ENCODE measurements at regions of chr3 and their contacts with region 1.

Region 1: GRCh38 chr3:186259612-186260383 is 102.2 kb downstream of the DGKG start:
- DNase-seq: peak; percentile 81 to 85 (median 84)
- ATAC-seq: peak; percentile 95
- H3K4me3 ChIP-seq: no peak overlapping the region
- H3K27ac ChIP-seq: no peak overlapping the region
- H3K4me1 ChIP-seq: peaks cover 7% of the 10 kb centered on the region
- H3K27me3 ChIP-seq: no peaks in the 10 kb centered on the region
- CTCF ChIP-seq: peak; percentile 78 to 92 (median 91)
- POLR2A ChIP-seq: no peak

Region 2: DNA sequence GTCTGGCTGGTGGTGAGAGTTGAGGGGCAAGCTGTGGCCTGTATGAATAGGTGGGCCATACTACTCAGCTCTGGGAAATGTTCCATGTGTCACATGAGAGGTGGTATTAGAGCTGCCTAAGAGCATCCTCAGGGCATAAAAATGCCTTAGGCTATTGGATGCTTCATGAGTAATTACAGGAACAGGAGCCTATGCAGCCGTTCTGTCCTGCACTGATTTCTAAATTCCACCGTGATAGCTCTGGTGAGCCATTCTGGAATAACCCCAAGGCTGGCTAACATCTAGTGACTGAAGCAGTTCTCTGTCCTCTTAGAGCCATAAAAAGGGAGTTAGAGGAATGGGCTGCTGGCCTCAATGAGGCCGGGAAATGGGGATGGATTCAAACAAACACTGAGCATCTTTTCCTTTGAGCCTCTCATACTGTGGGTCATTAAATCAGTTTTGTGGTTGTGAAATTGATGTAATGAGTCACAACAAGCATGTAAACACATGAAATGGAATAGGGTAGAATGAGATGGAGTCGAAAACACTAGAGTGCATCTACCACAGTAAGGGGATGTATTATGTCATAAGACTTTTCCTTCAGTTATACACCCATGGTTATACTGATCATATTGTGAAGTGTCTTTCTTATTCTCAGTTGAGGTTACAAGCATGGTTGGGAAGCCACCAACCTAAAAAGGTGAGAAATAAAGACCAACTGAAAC is 61.2 kb after region 1 on chr3:
- intact Hi-C with region 1: no loop called
- DNase-seq: no peak
- ATAC-seq: no peak
- H3K4me3 ChIP-seq: no peak overlapping the region
- H3K27ac ChIP-seq: no peak overlapping the region
- H3K4me1 ChIP-seq: no peaks in the 10 kb centered on the region
- H3K27me3 ChIP-seq: no peaks in the 10 kb centered on the region
- CTCF ChIP-seq: no peak
- POLR2A ChIP-seq: no peak

Region 3: GRCh38 chr3:186540221-186540834 is 280.5 kb after region 1 on chr3:
- intact Hi-C with region 1: loop called (anchors 5 kb)
- DNase-seq: peak; percentile 80 to 86 (median 84)
- ATAC-seq: peak; percentile 97
- H3K4me3 ChIP-seq: no peak overlapping the region
- H3K27ac ChIP-seq: peak overlapping the region in 2 of 4 donors; percentile 16 to 29
- H3K4me1 ChIP-seq: peaks cover 10% of the 10 kb centered on the region
- H3K27me3 ChIP-seq: no peaks in the 10 kb centered on the region
- CTCF ChIP-seq: peak; percentile 36 to 94 (median 86)
- POLR2A ChIP-seq: no peak

Region 4: GRCh38 chr3:186625600-186626042 is 365.8 kb after region 1 on chr3:
- intact Hi-C with region 1: loop called (anchors 10 kb)
- DNase-seq: no peak
- ATAC-seq: no peak
- H3K4me3 ChIP-seq: no peak overlapping the region
- H3K27ac ChIP-seq: no peak overlapping the region
- H3K4me1 ChIP-seq: no peaks in the 10 kb centered on the region
- H3K27me3 ChIP-seq: no peaks in the 10 kb centered on the region
- CTCF ChIP-seq: no peak
- POLR2A ChIP-seq: no peak

Measured in body of pancreas (tissue), 4 donors.